A673 (cell line): ENCODE measurements at regions of chr3 and their contacts with region 1.

Region 1: GRCh38 chr3:190424478-190425439 is 24.9 kb downstream of the TMEM207 start:
- DNase-seq: peak; percentile 84
- H3K4me3 ChIP-seq: no peak overlapping the region
- H3K27ac ChIP-seq: no peak overlapping the region
- H3K4me1 ChIP-seq: peaks cover 8% of the 10 kb centered on the region
- H3K27me3 ChIP-seq: no peaks in the 10 kb centered on the region
- CTCF ChIP-seq: peak; percentile 75

Region 2: GRCh38 chr3:189961525-189962161 is 463.1 kb before region 1 on chr3:
- CTCF ChIA-PET with region 1: interaction called, 15 read pairs
- POLR2A ChIA-PET with region 1: no interaction called
- intact Hi-C with region 1: loop called (anchors 2 kb)
- DNase-seq: peak; percentile 94
- H3K4me3 ChIP-seq: no peak overlapping the region
- H3K27ac ChIP-seq: no peak overlapping the region
- H3K4me1 ChIP-seq: peaks cover 29% of the 10 kb centered on the region
- H3K27me3 ChIP-seq: no peaks in the 10 kb centered on the region
- CTCF ChIP-seq: peak; percentile 93

Region 3: GRCh38 chr3:190224863-190225692 is 199.7 kb before region 1 on chr3:
- CTCF ChIA-PET with region 1: interaction called, 8 read pairs
- POLR2A ChIA-PET with region 1: no interaction called
- intact Hi-C with region 1: loop called (anchors 5 kb)
- DNase-seq: peak; percentile 79
- H3K4me3 ChIP-seq: no peak overlapping the region
- H3K27ac ChIP-seq: peak overlapping the region; percentile 7
- H3K4me1 ChIP-seq: peaks cover 27% of the 10 kb centered on the region
- H3K27me3 ChIP-seq: no peaks in the 10 kb centered on the region
- CTCF ChIP-seq: peak; percentile 61

Region 4: GRCh38 chr3:190321789-190322603 is 102.8 kb before region 1 on chr3 and contains the start of gene CLDN1:
- CTCF ChIA-PET with region 1: interaction called, 4 read pairs
- POLR2A ChIA-PET with region 1: no interaction called
- intact Hi-C with region 1: loop called (anchors 5 kb)
- DNase-seq: peak; percentile 95
- H3K4me3 ChIP-seq: peak within 1 kb of the TSS; percentile 78
- H3K27ac ChIP-seq: peak within 1 kb of the TSS; percentile 78
- H3K4me1 ChIP-seq: peaks cover 52% of the 10 kb centered on the region
- H3K27me3 ChIP-seq: no peaks in the 10 kb centered on the region
- CTCF ChIP-seq: peak; percentile 92
- total RNA-seq, gene CLDN1: 173 and 184 TPM in 2 replicates

Region 5: GRCh38 chr3:190384241-190384863 is 40.4 kb before region 1 on chr3:
- CTCF ChIA-PET with region 1: interaction called, 8 read pairs
- POLR2A ChIA-PET with region 1: no interaction called
- intact Hi-C with region 1: loop called (anchors 1 kb)
- DNase-seq: peak; percentile 88
- H3K4me3 ChIP-seq: no peak overlapping the region
- H3K27ac ChIP-seq: peak overlapping the region; percentile 36
- H3K4me1 ChIP-seq: peaks cover 81% of the 10 kb centered on the region
- H3K27me3 ChIP-seq: no peaks in the 10 kb centered on the region
- CTCF ChIP-seq: peak; percentile 80